H1 (cell line): ENCODE measurements at regions of chr7 and their contacts with region 1.

Region 1: GRCh38 chr7:107168233-107169119 is at the start of gene HBP1:
- DNase-seq: peak; percentile 98 to 100
- H3K4me3 ChIP-seq: peak within 1 kb of the TSS; percentile 79 to 85 (median 84)
- H3K27ac ChIP-seq: peak within 1 kb of the TSS; percentile 96
- H3K4me1 ChIP-seq: peaks cover 0 to 5% (median under 1%) of the 10 kb centered on the region in 4 experiments; a peak in 3 of 7 replicates
- H3K27me3 ChIP-seq: no peaks in the 10 kb centered on the region
- CTCF ChIP-seq: no peak
- EP300 ChIP-seq: no peak
- POLR2A ChIP-seq: peak; percentile 21 to 66
- RAD21 ChIP-seq: no peak
- total RNA-seq, gene HBP1: 29.2 and 37.3 TPM in 2 replicates

Region 2: GRCh38 chr7:106947244-106947728 is 221.2 kb before region 1 on chr7:
- CTCF ChIA-PET with region 1: interaction called, 16 read pairs
- POLR2A ChIA-PET with region 1: interaction called, 7 read pairs
- DNase-seq: peak in 1 of 2 experiments; percentile 83
- H3K4me3 ChIP-seq: no peak overlapping the region; a peak in 1 of 8 replicates
- H3K27ac ChIP-seq: no peak overlapping the region
- H3K4me1 ChIP-seq: peaks cover 0 to 14% (median 3%) of the 10 kb centered on the region in 4 experiments; a peak in 3 of 7 replicates
- H3K27me3 ChIP-seq: no peaks in the 10 kb centered on the region
- CTCF ChIP-seq: peak in 2 of 3 experiments; percentile 81 to 84; a peak in 3 of 4 replicates
- EP300 ChIP-seq: no peak
- POLR2A ChIP-seq: no peak
- RAD21 ChIP-seq: peak; percentile 90 to 96

Region 3: DNA sequence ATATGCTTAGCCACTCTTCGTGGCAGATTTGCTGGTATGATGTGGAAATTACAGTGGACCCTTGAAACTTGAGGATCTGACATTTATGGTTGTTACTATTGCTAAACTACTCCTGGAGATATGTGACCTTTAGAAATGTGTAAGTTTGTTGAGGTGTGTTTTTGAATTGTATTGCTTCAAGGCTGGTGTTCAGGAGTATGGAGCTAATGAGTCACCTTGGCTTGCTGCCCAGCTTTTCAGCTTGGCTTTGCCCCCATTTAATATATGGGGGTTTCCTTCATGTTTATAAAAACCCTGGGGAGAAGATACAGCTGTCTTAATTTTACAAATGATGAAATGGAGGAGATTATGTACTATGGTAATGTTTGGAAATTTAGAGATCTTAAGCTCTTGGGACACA is 11.9 kb after region 1 on chr7:
- CTCF ChIA-PET with region 1: interaction called, 3 read pairs
- POLR2A ChIA-PET with region 1: interaction called, 12 read pairs
- DNase-seq: no peak
- H3K4me3 ChIP-seq: no peak overlapping the region
- H3K27ac ChIP-seq: no peak overlapping the region
- H3K4me1 ChIP-seq: no peaks in the 10 kb centered on the region
- H3K27me3 ChIP-seq: no peaks in the 10 kb centered on the region
- CTCF ChIP-seq: no peak
- EP300 ChIP-seq: no peak
- POLR2A ChIP-seq: no peak
- RAD21 ChIP-seq: no peak